ENCODE measurements at regions of chr1 and their contacts with region 1.

Region 1: GRCh38 chr1:211382714-211383480 is 56.3 kb downstream of the TRAF5 start:
- H3K4me3 Mint-ChIP-seq: peak overlapping the region; percentile 96
- H3K27ac Mint-ChIP-seq: peak overlapping the region; percentile 99
- H3K4me1 Mint-ChIP-seq: peaks cover 24% of the 10 kb centered on the region
- H3K27me3 Mint-ChIP-seq: no peaks in the 10 kb centered on the region

Region 2: GRCh38 chr1:211113585-211113984 is 269.3 kb before region 1 on chr1:
- intact Hi-C with region 1: no loop called
- H3K4me3 Mint-ChIP-seq: no peak overlapping the region
- H3K27ac Mint-ChIP-seq: no peak overlapping the region
- H3K4me1 Mint-ChIP-seq: no peaks in the 10 kb centered on the region
- H3K27me3 Mint-ChIP-seq: peaks cover 3% of the 10 kb centered on the region

Region 3: GRCh38 chr1:211258756-211259637 is 123.9 kb before region 1 on chr1 and contains the start of gene RCOR3:
- intact Hi-C with region 1: loop called (anchors 2 kb)
- H3K4me3 Mint-ChIP-seq: peak within 1 kb of the TSS; percentile 94
- H3K27ac Mint-ChIP-seq: peak within 1 kb of the TSS; percentile 99
- H3K4me1 Mint-ChIP-seq: peaks cover 26% of the 10 kb centered on the region
- H3K27me3 Mint-ChIP-seq: no peaks in the 10 kb centered on the region

Measured in dendritic cell treated with granulocyte-macrophage colony-stimulating factor and Interleukin-4, amounts not matched to agents 40 ng/mL and 50 ng/mL, for 4 days (primary cell).